ENCODE measurements at regions of chr5 and their contacts with region 1.

Region 1: GRCh38 chr5:55720188-55720703 is 8.1 kb upstream of the SLC38A9 start:
- DNase-seq: no peak
- H3K27ac ChIP-seq: no peak overlapping the region
- CTCF ChIP-seq: no peak

Region 2: GRCh38 chr5:55509796-55510522 is 210.3 kb before region 1 on chr5:
- CTCF ChIA-PET with region 1: no interaction called
- POLR2A ChIA-PET with region 1: interaction called, 11 read pairs
- DNase-seq: no peak
- H3K27ac ChIP-seq: no peak overlapping the region
- CTCF ChIP-seq: no peak

Region 3: GRCh38 chr5:55923177-55923771 is 203.0 kb after region 1 on chr5:
- CTCF ChIA-PET with region 1: no interaction called
- POLR2A ChIA-PET with region 1: no interaction called
- DNase-seq: no peak
- H3K27ac ChIP-seq: no peak overlapping the region
- CTCF ChIP-seq: no peak

Region 4: GRCh38 chr5:56919942-56920662 is 1199.9 kb after region 1 on chr5:
- CTCF ChIA-PET with region 1: no interaction called
- POLR2A ChIA-PET with region 1: no interaction called
- DNase-seq: no peak
- H3K27ac ChIP-seq: no peak overlapping the region
- CTCF ChIP-seq: no peak